PC-9 (cell line): ENCODE measurements at regions of chr16 and their contacts with region 1.

Region 1: GRCh38 chr16:25045696-25046381 is 30.7 kb upstream of the ARHGAP17 start:
- DNase-seq: no peak
- H3K4me3 ChIP-seq: no peak overlapping the region
- H3K27ac ChIP-seq: no peak overlapping the region
- H3K4me1 ChIP-seq: peaks cover 39% of the 10 kb centered on the region
- H3K27me3 ChIP-seq: no peaks in the 10 kb centered on the region
- CTCF ChIP-seq: no peak

Region 2: GRCh38 chr16:24844101-24845030 is 201.5 kb before region 1 on chr16:
- CTCF ChIA-PET with region 1: interaction called, 8 read pairs
- POLR2A ChIA-PET with region 1: no interaction called
- intact Hi-C with region 1: loop called (anchors 2 kb)
- DNase-seq: peak; percentile 86 to 92
- H3K4me3 ChIP-seq: no peak overlapping the region
- H3K27ac ChIP-seq: peak overlapping the region; percentile 80
- H3K4me1 ChIP-seq: peaks cover 34% of the 10 kb centered on the region
- H3K27me3 ChIP-seq: no peaks in the 10 kb centered on the region
- CTCF ChIP-seq: no peak

Region 3: GRCh38 chr16:24980077-24980793 is 65.6 kb before region 1 on chr16:
- CTCF ChIA-PET with region 1: interaction called, 3 read pairs
- POLR2A ChIA-PET with region 1: no interaction called
- intact Hi-C with region 1: loop called (anchors 2 kb)
- DNase-seq: peak; percentile 61 to 78
- H3K4me3 ChIP-seq: no peak overlapping the region
- H3K27ac ChIP-seq: peak overlapping the region; percentile 23
- H3K4me1 ChIP-seq: peaks cover 30% of the 10 kb centered on the region
- H3K27me3 ChIP-seq: no peaks in the 10 kb centered on the region
- CTCF ChIP-seq: no peak

Region 4: DNA sequence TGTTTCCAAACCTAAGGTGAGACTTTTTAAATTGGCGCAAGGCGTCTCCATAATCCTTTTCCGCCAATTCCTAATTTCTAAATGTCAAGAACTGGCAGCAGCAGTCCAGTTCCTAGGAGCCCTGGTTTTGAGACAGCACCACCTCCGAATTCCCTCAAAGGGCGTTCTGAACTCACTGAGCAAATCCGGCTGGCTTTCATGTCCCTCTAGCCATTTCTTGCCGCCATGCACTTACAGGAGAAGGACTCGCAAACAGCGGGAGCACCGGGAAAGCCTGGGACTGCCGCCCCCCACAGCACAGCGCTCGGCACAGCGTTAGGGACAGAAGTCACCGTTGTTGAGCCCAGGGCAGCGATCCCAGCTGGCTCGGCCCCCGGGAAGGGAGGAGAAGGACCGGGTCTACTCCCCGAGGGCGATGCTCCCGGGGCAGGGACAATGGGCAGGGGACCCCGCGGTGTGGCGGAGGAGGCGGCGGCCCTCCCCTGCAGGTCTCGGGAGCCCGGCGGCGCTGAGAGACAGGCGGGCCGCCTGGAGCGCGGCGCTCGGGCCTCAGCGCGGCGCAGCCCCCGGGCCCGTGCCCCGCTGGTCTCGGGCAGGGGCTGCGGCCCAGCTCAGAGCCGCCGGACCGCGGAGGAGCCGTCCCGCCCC is 31.2 kb before region 1 on chr16:
- CTCF ChIA-PET with region 1: no interaction called
- POLR2A ChIA-PET with region 1: interaction called, 4 read pairs
- intact Hi-C with region 1: loop called (anchors 2 kb)
- DNase-seq: peak; percentile 33 to 46
- H3K4me3 ChIP-seq: peak overlapping the region; percentile 95
- H3K27ac ChIP-seq: peak overlapping the region; percentile 52
- H3K4me1 ChIP-seq: peaks cover 26% of the 10 kb centered on the region
- H3K27me3 ChIP-seq: no peaks in the 10 kb centered on the region
- CTCF ChIP-seq: no peak

Region 5: DNA sequence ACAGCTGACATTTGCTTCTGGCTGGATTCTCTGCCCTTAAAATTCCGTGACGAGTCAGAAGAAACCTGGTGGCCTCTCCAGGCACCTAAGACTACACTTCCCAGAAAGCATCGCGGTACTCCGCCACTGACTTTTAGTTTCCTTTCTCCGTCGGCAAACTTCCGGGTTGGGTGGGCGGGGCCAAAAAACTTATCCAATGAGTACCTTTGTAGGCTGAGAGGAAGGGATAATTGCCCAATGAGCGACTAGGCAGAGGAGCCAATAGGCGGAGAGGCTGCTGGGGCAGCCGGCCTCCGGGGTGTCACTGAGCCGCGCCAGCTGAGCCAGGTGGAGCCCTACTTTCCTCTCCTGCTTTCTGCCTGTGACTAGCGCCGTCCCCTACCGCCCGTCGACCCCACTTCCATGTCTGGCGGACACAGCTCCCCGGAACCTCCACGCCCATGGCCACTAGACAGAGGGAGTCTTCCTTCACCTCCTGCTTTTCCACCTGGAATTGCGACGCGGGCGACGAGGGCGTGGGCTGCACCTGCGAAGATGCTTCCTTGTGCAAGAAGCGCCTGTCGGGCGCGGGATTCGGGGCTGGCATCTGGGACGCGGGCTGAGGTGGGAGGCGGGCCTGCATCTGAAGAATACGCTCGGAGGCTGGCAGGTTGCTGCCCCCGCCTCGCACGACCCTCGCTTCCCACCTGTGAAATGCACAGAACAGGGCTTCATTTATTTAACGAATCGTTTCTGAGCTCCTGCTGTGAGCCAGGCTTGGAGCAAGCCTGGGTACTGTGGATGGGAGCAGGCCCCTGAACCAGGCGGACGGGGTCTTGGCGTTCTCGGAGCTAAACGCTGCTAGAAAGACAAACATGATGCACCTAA is 14.2 kb before region 1 on chr16:
- CTCF ChIA-PET with region 1: no interaction called
- POLR2A ChIA-PET with region 1: no interaction called
- intact Hi-C with region 1: no loop called
- DNase-seq: peak; percentile 91 to 93
- H3K4me3 ChIP-seq: peak overlapping the region; percentile 92
- H3K27ac ChIP-seq: no peak overlapping the region
- H3K4me1 ChIP-seq: peaks cover 13% of the 10 kb centered on the region
- H3K27me3 ChIP-seq: no peaks in the 10 kb centered on the region
- CTCF ChIP-seq: no peak

Region 6: GRCh38 chr16:25580042-25580441 is 534.2 kb after region 1 on chr16:
- CTCF ChIA-PET with region 1: no interaction called
- POLR2A ChIA-PET with region 1: no interaction called
- intact Hi-C with region 1: no loop called
- DNase-seq: no peak
- H3K4me3 ChIP-seq: no peak overlapping the region
- H3K27ac ChIP-seq: no peak overlapping the region
- H3K4me1 ChIP-seq: no peaks in the 10 kb centered on the region
- H3K27me3 ChIP-seq: peaks cover 34% of the 10 kb centered on the region
- CTCF ChIP-seq: no peak